SK-N-SH (cell line): ENCODE measurements at regions of chr2 and their contacts with region 1.

Region 1: DNA sequence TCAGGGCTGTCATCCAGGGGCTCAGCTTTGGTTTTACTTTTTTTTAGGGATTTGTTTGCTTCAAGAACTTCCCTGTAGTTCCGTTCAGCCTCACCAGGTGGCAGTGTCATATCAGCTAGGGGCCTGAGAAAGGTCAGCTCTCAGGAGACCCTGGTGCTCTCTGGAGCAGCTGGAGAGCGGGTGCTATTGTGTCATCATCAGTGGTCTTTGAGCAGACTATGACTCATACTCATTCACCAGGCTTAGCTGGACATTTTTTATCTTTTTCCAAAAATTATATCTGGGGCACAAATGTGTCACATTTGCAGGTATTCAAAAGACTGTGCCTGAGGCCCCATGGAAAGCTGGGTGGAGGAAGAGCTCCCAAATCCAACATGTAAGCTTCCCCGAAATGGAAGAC is 24.4 kb downstream of the ZNF892 start:
- DNase-seq: peak; percentile 80
- H3K4me3 ChIP-seq: peak overlapping the region in 1 of 2 experiments; percentile 40; a peak in 1 of 4 replicates
- H3K27ac ChIP-seq: no peak overlapping the region
- H3K4me1 ChIP-seq: no peaks in the 10 kb centered on the region
- H3K27me3 ChIP-seq: no peaks in the 10 kb centered on the region
- CTCF ChIP-seq: peak; percentile 67
- EP300 ChIP-seq: no peak
- RAD21 ChIP-seq: peak; percentile 86

Region 2: GRCh38 chr2:94955702-94956101 is 276.0 kb before region 1 on chr2:
- CTCF ChIA-PET with region 1: no interaction called
- POLR2A ChIA-PET with region 1: no interaction called
- DNase-seq: no peak
- H3K4me3 ChIP-seq: no peak overlapping the region
- H3K27ac ChIP-seq: no peak overlapping the region
- H3K4me1 ChIP-seq: no peaks in the 10 kb centered on the region
- H3K27me3 ChIP-seq: peaks cover 16% of the 10 kb centered on the region; the same call in 1 of the 2 replicates
- CTCF ChIP-seq: no peak
- EP300 ChIP-seq: no peak
- RAD21 ChIP-seq: no peak

Region 3: GRCh38 chr2:95305380-95306061 is 73.8 kb after region 1 on chr2:
- CTCF ChIA-PET with region 1: interaction called, 12 read pairs
- POLR2A ChIA-PET with region 1: no interaction called
- DNase-seq: no peak
- H3K4me3 ChIP-seq: no peak overlapping the region
- H3K27ac ChIP-seq: no peak overlapping the region
- H3K4me1 ChIP-seq: peaks cover 0 to 43% of the 10 kb centered on the region in 2 experiments; a peak in 2 of 4 replicates
- H3K27me3 ChIP-seq: no peaks in the 10 kb centered on the region; the same call in 1 of the 2 replicates
- CTCF ChIP-seq: no peak
- EP300 ChIP-seq: no peak
- RAD21 ChIP-seq: no peak

Region 4: DNA sequence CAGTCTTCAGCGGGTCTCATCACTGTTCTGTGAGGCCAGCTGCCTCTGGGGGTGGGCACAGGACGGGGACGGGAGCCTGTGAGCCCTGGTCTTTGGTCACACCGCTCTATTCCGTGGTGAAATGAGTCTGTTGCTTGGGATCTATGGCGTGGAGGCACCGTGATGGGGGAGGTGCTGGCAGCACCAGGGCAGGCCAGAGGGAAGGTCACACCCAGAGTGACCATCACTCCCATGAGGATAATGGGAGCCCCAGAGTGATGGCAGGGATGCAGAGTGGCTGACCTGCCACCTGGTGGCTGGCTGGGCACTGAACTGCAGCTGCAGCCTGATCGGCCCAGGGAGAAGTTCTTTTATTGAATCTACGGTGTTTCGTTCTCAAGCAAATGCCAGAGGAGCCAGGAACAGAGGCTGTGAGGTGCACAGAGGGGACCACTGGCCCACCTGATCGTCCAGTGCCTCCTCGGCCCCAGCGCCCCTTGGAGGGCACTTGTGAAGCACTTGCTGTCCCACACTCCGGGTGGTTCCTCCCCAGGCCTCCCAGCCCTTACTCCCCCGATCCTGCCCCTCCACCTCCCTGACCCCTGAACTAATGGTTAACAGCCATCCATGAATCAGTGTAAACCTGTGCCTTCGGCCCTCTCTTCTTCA is 83.4 kb after region 1 on chr2:
- CTCF ChIA-PET with region 1: interaction called, 90 read pairs
- POLR2A ChIA-PET with region 1: no interaction called
- DNase-seq: peak; percentile 85
- H3K4me3 ChIP-seq: no peak overlapping the region
- H3K27ac ChIP-seq: no peak overlapping the region
- H3K4me1 ChIP-seq: no peaks in the 10 kb centered on the region
- H3K27me3 ChIP-seq: no peaks in the 10 kb centered on the region; the same call in 1 of the 2 replicates
- CTCF ChIP-seq: peak; percentile 57
- EP300 ChIP-seq: no peak
- RAD21 ChIP-seq: peak; percentile 71